Prostate gland (tissue), 2 donors: ENCODE measurements at regions of chr1 and their contacts with region 1.

Region 1: DNA sequence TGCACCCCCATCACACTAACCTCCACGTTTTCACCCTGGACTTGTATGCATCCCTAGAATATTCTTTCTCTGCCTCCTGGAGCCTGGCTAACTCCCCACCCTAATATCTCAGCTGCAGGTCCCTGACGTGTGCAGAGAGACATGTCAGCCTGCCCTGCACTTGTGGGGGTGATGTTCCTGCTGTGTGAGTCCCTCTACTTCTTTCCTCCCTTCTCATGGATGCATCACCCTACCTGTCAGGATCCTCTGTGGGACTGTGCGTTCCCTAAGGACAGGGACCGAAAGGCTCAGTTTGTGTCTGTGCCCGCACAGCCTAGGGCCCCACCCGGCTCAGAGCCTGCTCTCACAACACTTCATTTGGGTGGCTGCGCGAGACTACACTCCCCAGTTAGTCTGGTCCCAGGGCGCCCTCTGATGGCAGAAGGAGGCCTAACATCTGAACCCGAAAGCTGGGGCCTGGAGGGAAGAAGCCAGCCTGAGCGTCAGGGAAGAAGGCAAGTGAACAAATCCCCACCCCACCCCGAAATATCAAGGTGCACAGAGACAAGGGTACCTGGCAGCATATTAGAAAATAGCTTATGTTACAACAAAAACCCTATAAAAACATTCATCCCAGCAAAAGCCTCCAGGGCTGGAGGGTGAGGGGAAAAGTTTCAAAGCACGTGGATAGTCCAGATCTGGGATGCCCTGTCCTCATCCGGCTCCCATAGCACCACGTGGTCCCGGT is 3.7 kb downstream of the CD52 start:
- DNase-seq: peak; percentile 88
- H3K4me3 ChIP-seq: no peak overlapping the region
- H3K27ac ChIP-seq: no peak overlapping the region
- H3K4me1 ChIP-seq: no peaks in the 10 kb centered on the region
- H3K27me3 ChIP-seq: no peaks in the 10 kb centered on the region
- CTCF ChIP-seq: peak; percentile 66 to 93 (median 86)
- POLR2A ChIP-seq: no peak

Region 2: GRCh38 chr1:26111530-26112406 is 209.7 kb before region 1 on chr1 and contains the start of gene PDIK1L:
- intact Hi-C with region 1: loop called (anchors 5 kb)
- DNase-seq: peak; percentile 92
- H3K4me3 ChIP-seq: peak within 1 kb of the TSS; percentile 87 to 88
- H3K27ac ChIP-seq: peak within 1 kb of the TSS; percentile 87 to 92
- H3K4me1 ChIP-seq: no peaks in the 10 kb centered on the region
- H3K27me3 ChIP-seq: no peaks in the 10 kb centered on the region
- CTCF ChIP-seq: peak in 2 of 4 experiments; percentile 16 to 17
- POLR2A ChIP-seq: peak; percentile 80
- total RNA-seq, gene PDIK1L: 10.5 TPM

Region 3: DNA sequence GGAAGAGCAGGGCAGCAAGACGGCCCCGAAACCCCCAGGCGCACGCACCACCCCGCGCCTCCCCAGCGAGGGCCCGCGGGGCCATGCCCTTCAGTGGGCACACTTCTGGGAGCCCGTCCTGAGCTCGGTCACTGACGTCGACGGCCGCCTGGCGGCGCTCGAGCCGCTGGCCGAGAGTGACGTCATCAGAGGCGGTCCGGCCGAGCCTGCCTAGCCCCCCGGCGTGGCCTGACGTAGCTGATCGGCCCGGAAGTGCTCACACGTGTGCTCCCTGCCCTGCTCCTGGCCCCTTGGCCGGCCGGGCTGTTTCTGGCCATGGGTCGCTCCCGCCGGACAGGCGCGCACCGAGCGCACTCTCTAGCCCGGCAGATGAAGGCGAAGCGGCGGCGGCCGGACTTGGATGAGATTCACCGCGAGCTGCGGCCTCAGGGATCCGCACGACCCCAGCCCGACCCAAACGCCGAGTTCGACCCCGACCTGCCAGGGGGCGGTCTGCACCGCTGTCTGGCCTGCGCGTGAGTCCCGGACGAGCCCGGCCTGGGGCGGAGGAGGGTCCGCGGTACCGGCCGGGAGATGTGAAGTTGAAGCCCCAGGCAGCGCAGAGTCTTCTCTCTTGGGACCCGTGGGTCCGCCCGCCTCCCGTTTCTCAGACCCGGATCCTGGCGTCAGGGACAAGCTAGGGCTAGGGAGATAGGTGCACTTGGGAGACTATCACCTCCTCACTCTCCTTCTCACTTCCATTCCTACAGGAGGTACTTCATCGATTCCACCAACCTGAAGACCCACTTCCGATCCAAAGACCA is 151.6 kb before region 1 on chr1 and contains the start of gene ZNF593:
- intact Hi-C with region 1: loop called (anchors 5 kb)
- DNase-seq: peak; percentile 87
- H3K4me3 ChIP-seq: peak within 1 kb of the TSS; percentile 75 to 95
- H3K27ac ChIP-seq: peak within 1 kb of the TSS; percentile 68 to 77
- H3K4me1 ChIP-seq: no peaks in the 10 kb centered on the region
- H3K27me3 ChIP-seq: no peaks in the 10 kb centered on the region
- CTCF ChIP-seq: peak; percentile 92 to 99 (median 96)
- POLR2A ChIP-seq: peak; percentile 52
- total RNA-seq, gene ZNF593: 44.5 to 50.7 TPM

Region 4: GRCh38 chr1:26279456-26280332 is 41.8 kb before region 1 on chr1 and contains the start of gene SH3BGRL3:
- intact Hi-C with region 1: loop called (anchors 2 kb)
- DNase-seq: peak; percentile 87
- H3K4me3 ChIP-seq: peak within 1 kb of the TSS; percentile 77 to 91
- H3K27ac ChIP-seq: peak within 1 kb of the TSS; percentile 87 to 92
- H3K4me1 ChIP-seq: peaks cover 23% of the 10 kb centered on the region
- H3K27me3 ChIP-seq: no peaks in the 10 kb centered on the region
- CTCF ChIP-seq: peak in 3 of 4 experiments; percentile 11 to 45 (median 36)
- POLR2A ChIP-seq: peak; percentile 99
- total RNA-seq, gene SH3BGRL3: 37.4 to 55.3 TPM